ENCODE measurements at regions of chr12 and their contacts with region 1.

Region 1: DNA sequence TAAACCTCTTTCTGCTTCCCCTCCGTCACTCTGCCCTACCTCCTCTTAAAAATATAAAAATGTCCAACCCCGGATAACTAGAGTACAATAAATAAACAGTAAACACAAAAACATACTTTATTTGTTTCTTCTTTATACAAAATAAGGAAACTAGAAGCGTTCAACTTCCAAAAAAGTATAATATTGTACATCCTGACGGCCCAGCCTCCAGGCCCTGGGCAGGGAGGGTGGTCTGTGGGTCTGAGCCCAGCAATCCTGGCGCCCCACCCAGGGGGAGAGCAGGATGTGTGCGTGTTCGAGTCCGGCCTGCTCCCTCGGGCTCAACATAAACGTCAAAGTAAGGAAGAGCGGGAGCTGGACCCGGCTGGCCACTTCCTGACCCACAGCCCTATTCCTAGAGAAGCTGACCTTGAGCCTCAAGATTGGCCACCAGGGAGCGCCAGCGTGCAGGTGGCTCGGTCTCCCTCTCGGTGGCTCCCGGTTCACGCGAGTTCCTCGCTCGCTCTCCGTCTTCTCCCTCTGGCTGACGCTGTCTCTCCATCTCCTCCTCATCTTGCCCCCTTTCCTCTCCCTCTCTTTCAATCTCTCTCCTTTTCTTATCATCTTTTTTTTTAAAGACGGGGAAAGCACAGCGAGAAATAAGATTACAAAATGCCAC is 9.4 kb downstream of the LHX5 start:
- DNase-seq: peak; percentile 29
- H3K4me3 ChIP-seq: peak overlapping the region; percentile 29
- H3K27ac ChIP-seq: no peak overlapping the region
- H3K27me3 ChIP-seq: peaks cover 64% of the 10 kb centered on the region
- CTCF ChIP-seq: peak; percentile 92

Region 2: DNA sequence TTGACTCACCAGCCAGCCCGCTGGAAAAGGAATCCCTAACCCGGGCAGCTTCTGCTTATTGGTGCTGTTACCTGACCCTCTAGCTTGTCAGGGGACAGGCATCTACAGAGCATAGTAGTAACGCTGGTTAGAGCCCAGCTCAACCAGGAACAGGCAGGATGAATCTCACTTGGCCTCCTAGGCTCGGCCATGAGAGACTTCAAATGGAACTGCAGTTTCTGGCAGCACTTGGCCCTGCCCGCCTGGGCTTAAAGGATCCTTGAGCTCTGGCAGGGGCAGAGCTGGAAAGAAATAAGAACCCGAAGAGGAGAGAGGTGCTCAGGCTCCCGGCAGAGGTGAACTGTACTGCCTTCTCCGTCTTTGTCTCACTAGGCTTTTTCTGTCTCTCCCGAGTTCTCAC is 11.7 kb after region 1 on chr12:
- CTCF ChIA-PET with region 1: interaction called, 10 read pairs
- POLR2A ChIA-PET with region 1: no interaction called
- DNase-seq: no peak
- H3K4me3 ChIP-seq: no peak overlapping the region
- H3K27ac ChIP-seq: no peak overlapping the region
- H3K27me3 ChIP-seq: peaks cover 92% of the 10 kb centered on the region
- CTCF ChIP-seq: no peak

Region 3: DNA sequence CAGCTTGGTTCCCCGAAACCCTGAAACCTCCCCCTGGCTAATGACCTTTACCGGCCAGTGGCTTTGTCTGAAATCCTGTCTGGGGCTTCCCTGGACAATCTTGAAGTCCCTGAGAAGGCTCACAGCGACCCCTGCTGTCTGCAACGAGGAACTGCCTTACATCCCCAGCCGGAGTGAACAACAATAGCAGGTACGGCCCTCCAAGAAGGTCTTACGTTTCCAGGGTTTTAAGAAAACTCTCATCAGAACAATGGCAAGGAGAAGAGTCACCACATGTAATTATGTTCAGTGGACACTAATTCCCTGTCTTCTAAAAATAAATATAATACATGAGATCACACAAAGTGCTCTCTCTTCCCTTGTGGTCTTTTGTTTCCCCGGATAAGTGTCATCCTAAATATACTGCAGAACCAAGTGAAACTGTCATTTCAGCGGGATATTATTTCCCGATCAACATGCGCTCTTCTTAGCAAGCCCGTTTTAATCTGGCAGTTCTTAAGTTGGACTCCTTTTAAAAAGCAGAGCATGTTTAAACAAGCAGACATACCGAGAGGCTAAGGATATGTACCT is 450.6 kb after region 1 on chr12:
- CTCF ChIA-PET with region 1: interaction called, 32 read pairs
- POLR2A ChIA-PET with region 1: interaction called, 6 read pairs
- DNase-seq: peak; percentile 51
- H3K4me3 ChIP-seq: no peak overlapping the region
- H3K27ac ChIP-seq: no peak overlapping the region
- H3K27me3 ChIP-seq: no peaks in the 10 kb centered on the region
- CTCF ChIP-seq: peak; percentile 97